GM10248 (cell line): ENCODE measurements at regions of chr4 and their contacts with region 1.

Region 1: GRCh38 chr4:2220016-2220630 is 21.8 kb downstream of the HAUS3 start:
- DNase-seq: peak; percentile 66
- CTCF ChIP-seq: peak; percentile 96

Region 2: DNA sequence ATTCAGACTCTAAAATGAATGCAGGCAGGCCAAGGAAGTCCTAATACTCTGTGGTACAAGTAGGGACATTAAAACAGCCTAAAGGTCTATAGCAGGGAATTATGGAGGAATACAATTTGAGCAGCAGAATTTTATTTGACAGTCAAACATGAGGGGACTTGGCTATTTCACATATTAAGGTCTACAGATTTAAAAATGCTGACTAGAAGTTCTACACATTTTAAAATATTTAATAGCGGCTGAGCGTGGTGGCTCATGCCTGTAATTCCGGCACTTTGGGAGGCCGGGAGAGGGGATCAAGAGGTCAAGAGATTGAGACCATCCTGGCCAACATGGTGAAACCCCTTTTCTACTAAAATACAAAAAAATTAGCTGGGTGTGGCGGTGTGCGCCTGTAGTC is 11.0 kb after region 1 on chr4:
- CTCF ChIA-PET with region 1: interaction called, 19 read pairs
- POLR2A ChIA-PET with region 1: no interaction called
- DNase-seq: no peak
- CTCF ChIP-seq: no peak

Region 3: GRCh38 chr4:2236944-2237666 is 17.0 kb after region 1 on chr4:
- CTCF ChIA-PET with region 1: interaction called, 21 read pairs
- POLR2A ChIA-PET with region 1: no interaction called
- DNase-seq: no peak
- CTCF ChIP-seq: no peak

Region 4: DNA sequence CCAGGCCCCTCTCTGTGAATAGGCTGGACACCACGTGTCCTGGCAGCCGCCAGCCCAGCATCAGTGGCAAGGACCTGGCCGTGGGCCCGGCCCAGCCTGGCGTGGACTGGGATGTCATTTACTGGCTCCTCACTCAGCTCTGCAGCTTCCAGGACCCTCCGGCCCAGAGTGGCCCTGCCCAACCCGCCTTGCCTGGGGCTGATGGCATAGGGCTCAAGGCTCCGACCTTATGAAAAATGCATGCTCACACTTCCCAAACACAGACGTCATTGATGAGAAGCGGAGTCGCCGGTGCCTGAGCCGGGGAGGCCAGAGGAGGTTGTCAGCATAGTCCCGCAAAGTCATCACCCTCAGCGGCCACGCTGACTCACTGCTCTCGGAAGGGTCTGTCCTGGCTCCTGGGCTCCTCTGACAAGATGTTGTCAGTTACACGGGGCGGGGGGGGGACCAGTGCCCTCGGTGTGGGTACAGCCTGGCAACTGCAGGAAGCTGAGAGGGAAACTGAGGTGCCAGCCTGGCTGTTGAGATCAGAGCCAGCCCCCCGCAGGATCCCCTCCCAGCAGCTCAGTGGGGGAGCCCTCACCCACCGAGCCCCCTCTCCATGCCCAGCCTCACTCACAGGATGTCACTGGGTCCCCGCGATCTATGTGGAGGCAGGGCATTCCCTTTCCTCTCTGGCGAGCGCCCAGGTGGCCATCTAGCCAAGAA is 213.0 kb after region 1 on chr4:
- CTCF ChIA-PET with region 1: interaction called, 82 read pairs
- POLR2A ChIA-PET with region 1: no interaction called
- DNase-seq: no peak
- CTCF ChIP-seq: no peak

Region 5: GRCh38 chr4:2441393-2442174 is 221.5 kb after region 1 on chr4:
- CTCF ChIA-PET with region 1: interaction called, 82 read pairs
- POLR2A ChIA-PET with region 1: no interaction called
- DNase-seq: peak; percentile 92
- CTCF ChIP-seq: peak; percentile 87

Region 6: DNA sequence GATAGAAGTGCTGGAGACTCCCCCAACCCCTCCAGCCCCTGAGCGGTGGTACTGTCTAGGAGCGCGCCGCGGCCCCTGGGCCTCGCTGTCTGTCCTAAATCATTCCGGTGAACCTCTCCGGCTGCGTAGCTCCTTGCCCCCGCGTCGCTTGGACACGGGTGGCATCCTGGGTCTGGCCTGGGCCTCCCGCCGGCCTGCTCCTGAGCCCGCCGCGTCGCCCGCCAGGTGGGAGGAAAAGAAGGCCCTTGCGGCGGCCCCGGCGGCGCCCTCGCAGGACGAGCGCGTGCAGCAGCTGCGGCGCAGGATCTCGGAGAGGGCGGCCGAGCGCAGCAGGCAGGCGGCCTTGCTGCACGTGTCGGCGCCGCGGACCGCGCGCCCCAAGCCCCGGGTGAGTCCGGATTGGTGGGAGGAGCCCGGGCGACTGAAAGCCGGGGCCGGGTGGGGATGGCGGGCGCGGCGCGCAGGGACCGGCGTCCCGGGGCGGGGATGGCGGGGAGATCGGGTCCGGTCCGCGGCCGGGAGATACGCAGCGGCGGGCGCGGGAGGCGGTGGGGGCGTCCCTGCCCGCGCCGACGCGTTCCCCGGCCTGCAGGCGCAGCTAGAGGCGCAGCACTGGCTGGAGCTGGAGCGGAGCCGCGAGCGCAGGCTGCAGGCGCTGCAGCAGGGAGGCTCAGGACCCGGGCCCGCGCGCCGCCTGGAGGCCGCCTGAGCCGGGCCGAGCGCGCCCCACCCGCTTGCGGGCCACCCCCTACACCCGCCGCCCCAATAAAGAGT is 242.3 kb after region 1 on chr4:
- CTCF ChIA-PET with region 1: interaction called, 26 read pairs
- POLR2A ChIA-PET with region 1: no interaction called
- DNase-seq: peak; percentile 84
- CTCF ChIP-seq: peak; percentile 53

Region 7: DNA sequence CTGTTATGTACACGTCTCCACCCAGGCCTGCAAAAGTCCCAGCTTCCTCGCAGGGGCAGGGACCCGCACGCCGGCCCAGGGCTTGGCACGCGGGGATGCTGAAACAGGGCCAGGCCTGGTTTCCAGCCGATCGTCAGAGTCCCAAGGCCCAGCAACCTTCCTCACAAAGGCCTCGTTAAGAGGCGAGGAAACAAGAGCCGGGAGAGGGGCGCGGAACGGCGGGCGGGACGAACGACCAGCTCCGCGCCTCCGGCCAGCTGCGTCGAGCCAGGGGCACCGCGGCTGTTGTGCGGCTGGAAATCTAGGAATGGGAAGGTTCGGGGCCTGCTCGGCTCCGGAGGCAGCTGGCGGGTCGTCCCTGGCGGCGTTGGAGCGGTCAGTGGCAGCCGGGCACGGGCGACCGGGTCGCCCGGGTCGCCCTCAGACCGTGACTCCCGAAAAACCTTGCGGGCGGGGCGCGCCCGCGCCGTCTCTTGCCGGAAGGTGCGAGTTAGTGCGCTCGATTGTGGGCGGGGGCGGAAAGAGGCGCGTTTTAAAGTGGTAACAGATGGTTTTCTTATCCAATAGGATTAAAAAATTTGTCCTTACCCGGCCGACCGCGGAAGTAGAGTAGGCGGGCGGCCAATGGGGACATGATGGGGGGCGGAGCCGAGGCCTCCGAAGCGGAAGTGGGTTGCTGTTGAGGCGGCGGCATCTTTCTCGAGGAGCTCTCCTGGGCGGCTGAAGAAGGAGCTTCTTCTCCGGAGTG is 248.5 kb after region 1 on chr4 and contains the start of gene RNF4:
- CTCF ChIA-PET with region 1: interaction called, 26 read pairs
- POLR2A ChIA-PET with region 1: no interaction called
- DNase-seq: peak; percentile 98
- CTCF ChIP-seq: no peak